ENCODE measurements at regions of chr4 and their contacts with region 1.

Region 1: DNA sequence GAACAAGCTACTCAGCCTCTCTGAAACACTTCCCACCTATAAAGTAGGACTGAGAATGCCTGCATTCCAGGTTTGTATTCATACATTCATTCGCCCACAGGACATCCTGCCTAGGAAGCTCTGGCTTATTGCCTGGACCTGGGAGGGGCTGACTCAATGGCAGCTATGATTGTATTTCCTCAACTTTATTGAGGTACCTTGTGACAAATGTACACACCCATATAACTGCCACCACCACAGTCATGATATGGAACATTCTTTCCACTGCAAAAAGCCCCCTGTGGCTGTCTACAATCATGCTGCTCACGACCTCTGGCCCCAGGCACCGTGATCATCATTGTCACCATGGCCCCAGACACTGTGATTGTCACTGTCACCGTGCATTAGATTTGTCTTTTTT is 68.3 kb downstream of the ABLIM2 start:
- DNase-seq: peak; percentile 42
- H3K4me3 Mint-ChIP-seq: no peak overlapping the region
- H3K27ac Mint-ChIP-seq: no peak overlapping the region
- H3K4me1 Mint-ChIP-seq: no peaks in the 10 kb centered on the region
- H3K27me3 Mint-ChIP-seq: no peaks in the 10 kb centered on the region

Region 2: GRCh38 chr4:8000721-8001491 is 89.4 kb before region 1 on chr4:
- CTCF ChIA-PET with region 1: no interaction called
- POLR2A ChIA-PET with region 1: no interaction called
- DNase-seq: no peak
- H3K4me3 Mint-ChIP-seq: no peak overlapping the region
- H3K27ac Mint-ChIP-seq: no peak overlapping the region
- H3K4me1 Mint-ChIP-seq: no peaks in the 10 kb centered on the region
- H3K27me3 Mint-ChIP-seq: no peaks in the 10 kb centered on the region

Region 3: DNA sequence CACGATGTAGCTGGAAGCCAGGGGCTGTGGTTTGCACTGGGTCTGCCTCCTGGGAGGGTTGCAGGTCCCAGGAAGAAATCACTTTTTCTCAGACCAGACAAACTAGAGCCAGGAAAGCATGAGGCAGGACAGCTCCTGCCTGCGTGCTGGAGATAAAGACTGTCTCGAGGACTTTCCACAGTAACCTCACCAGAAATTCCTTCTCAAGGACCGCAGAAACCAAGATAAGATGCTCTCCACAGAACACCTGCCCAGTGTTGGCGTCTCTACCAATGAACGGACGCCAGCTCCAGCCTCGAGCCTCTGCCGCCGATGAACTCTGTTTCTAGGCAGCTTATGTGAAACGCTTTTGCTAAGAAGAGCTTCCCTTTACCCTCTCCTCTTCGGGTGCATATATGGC is 73.8 kb before region 1 on chr4:
- CTCF ChIA-PET with region 1: no interaction called
- POLR2A ChIA-PET with region 1: interaction called, 10 read pairs
- DNase-seq: no peak
- H3K4me3 Mint-ChIP-seq: no peak overlapping the region
- H3K27ac Mint-ChIP-seq: no peak overlapping the region
- H3K4me1 Mint-ChIP-seq: peaks cover 2% of the 10 kb centered on the region
- H3K27me3 Mint-ChIP-seq: no peaks in the 10 kb centered on the region

Region 4: DNA sequence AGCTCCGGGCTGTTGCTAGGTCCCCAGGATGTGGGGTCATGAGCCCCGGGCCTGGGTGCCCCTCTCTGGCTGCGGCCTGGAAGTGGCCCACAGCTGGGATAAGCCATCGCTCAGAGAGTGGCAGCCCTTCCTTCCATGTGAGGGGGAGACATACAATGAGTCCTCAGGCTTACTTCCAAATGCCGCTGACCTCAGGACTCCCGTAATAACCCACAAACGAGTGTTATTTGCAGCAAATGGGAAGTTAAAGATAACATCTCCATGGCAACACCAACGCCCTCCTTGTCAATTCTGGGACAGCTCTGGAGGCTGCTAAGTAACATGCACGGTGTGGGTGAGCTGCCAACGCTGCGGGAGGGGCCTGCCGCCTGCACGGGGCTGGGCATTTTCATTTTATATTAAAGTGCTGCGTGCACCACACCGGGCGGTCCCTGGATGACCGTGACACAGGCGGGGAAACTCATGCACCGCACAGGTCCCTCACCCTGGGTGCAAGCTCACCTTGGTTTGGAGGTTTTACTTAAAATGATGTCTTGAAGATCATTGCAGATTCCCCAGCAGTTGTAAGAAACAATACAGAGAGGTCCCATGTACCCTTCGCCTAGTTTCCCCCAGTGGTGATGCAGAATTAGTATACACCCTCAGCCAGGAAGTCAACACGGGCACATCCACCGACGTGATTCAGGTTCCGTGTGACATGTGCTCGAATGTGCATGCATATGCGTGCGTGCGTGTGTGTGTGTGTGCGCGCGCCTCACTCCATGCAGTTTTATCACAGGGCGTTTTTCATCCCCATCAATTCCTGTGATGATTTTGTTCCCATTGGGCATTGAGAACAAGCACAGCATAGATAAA is 11.1 kb before region 1 on chr4:
- CTCF ChIA-PET with region 1: no interaction called
- POLR2A ChIA-PET with region 1: no interaction called
- DNase-seq: no peak
- H3K4me3 Mint-ChIP-seq: no peak overlapping the region
- H3K27ac Mint-ChIP-seq: no peak overlapping the region
- H3K4me1 Mint-ChIP-seq: no peaks in the 10 kb centered on the region
- H3K27me3 Mint-ChIP-seq: no peaks in the 10 kb centered on the region

Region 5: DNA sequence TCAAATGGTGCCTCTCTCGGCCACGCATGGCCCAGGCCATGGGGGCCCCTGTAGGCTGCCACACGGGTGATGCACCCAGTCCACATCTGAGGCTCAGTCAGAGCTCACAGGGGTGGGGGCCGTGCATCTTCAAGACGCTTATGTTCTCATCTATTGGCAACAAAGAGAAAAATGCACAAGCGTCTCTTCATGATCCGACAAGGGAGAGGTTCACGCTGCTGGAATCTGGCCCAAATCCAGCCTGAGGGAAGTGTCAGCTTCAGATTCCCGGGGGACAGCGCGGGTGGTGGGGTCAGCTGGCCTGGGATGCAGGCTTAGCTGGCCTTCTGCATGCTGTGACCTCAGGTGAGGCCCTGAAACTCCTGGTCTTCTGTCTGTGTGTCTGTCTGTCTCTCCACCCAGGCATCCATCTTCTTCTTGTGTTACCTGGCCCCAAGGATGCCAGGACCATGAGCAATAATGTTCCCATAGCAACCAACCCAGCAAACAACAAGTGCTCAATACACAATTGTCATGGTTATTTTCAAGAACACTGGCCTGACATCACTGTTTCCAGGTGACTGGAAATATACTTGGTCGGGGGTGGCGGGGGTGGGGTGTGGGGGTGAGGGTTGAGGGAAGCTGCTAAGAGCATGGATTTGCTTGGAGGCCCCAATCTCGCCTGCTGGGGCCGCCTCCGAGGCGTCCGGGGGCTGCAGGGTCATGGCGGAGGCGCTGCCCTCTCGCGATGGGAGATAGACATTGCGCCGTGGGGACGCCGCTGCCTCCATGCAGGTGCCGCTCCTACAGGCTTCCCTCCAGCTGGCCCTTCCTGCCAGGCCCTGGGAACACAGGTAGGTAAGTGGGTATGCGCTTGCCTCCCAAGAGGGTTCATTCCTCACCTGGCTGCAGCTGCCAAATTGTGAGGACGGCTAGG is 20.0 kb after region 1 on chr4:
- CTCF ChIA-PET with region 1: no interaction called
- POLR2A ChIA-PET with region 1: no interaction called
- DNase-seq: no peak
- H3K4me3 Mint-ChIP-seq: no peak overlapping the region
- H3K27ac Mint-ChIP-seq: no peak overlapping the region
- H3K4me1 Mint-ChIP-seq: no peaks in the 10 kb centered on the region
- H3K27me3 Mint-ChIP-seq: no peaks in the 10 kb centered on the region